AG04450 (cell line): ENCODE measurements at regions of chr10 and their contacts with region 1.

Region 1: DNA sequence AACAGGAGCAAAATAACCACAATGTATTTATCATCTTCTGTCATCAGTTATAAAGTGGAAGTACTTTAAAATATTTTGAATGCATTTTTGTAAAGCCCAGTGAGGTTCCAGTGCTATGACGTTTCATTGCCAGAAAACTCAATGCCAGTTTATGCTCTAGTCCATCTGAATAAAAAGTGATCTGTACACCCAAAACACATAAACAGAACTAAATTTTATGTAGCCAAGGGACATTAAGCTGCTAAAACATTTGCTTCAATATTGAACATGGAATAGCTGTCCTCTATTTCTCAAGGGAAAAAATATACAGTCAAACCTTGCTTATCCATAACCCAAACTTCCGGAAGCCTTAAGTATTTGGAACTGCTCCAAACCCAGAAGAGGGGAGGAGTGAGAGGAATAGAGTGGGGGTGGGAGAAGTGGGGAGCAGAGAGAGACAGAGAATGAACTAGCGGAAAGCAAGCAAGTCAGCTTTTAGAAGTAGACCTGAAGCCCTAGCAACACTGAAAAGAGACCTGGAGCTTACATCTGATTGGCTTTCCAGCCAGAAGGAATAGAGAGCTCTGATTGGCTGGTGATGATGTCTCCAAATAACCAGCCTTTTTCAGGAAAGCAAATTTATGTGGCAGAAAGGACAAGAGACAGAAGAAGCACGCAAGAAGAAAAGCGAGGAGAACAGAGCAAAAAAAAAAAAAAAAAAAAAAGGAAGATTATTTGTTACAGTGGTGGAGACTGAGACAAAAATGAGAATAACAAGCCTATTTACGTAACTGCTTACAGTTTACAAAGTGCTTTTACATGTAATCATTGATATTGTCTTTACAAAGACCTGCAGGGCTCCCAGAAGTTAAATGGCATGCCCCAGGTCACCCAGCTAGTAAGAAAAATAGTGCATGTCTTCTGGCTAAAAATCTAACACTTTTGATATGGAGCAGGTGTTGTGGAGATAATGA is 196.0 kb downstream of the RNLS start:
- DNase-seq: peak; percentile 44
- H3K4me3 ChIP-seq: no peak overlapping the region
- H3K27ac ChIP-seq: no peak overlapping the region
- H3K27me3 ChIP-seq: no peaks in the 10 kb centered on the region
- CTCF ChIP-seq: no peak

Region 2: GRCh38 chr10:87850742-87851205 is 536.3 kb before region 1 on chr10:
- CTCF ChIA-PET with region 1: interaction called, 20 read pairs
- POLR2A ChIA-PET with region 1: no interaction called
- DNase-seq: no peak
- H3K4me3 ChIP-seq: no peak overlapping the region
- H3K27ac ChIP-seq: no peak overlapping the region
- H3K27me3 ChIP-seq: no peaks in the 10 kb centered on the region
- CTCF ChIP-seq: peak; percentile 71

Region 3: GRCh38 chr10:87872828-87873227 is 514.3 kb before region 1 on chr10:
- CTCF ChIA-PET with region 1: interaction called, 10 read pairs
- POLR2A ChIA-PET with region 1: no interaction called
- DNase-seq: no peak
- H3K4me3 ChIP-seq: no peak overlapping the region
- H3K27ac ChIP-seq: no peak overlapping the region
- H3K27me3 ChIP-seq: no peaks in the 10 kb centered on the region
- CTCF ChIP-seq: no peak

Region 4: DNA sequence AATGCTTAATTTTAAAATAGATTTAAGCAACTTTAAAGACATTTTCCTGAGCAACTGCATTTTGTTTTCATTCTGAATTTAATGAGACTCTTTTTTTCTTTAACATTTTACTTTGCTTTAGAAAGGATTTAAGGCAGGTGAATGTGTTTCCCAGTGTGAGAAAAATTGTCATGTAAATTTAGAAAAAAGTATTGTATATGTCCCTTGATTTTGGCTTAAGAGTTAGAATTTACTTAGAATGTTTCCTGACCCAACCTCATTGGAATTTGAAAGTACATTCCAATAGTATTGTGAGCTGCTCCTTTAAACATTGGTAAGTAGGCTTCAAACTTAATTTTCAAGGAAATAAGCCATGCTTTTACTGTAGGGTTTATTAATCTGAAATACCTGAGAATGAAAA is 413.5 kb before region 1 on chr10:
- CTCF ChIA-PET with region 1: interaction called, 4 read pairs
- POLR2A ChIA-PET with region 1: interaction called, 14 read pairs
- DNase-seq: no peak
- H3K4me3 ChIP-seq: no peak overlapping the region
- H3K27ac ChIP-seq: no peak overlapping the region
- H3K27me3 ChIP-seq: no peaks in the 10 kb centered on the region
- CTCF ChIP-seq: no peak

Region 5: DNA sequence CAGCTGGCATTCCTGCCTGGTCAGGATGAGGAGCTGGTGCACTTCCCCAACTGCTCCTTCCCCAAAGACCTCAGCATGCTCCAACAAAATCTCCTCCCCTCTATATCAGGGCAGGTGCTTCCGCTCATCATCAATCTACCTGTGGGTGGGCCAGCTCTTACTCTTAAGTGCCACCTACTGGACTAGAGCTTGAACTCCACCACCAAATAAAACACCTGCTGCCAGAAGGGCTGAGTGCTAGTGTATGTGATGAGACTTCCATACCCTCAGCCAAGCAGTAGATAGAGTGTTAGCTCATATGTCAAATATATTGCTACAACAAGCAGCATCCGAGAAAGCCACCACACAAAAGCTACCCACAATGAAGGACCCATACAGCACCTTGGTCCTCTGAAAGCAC is 68.3 kb before region 1 on chr10:
- CTCF ChIA-PET with region 1: no interaction called
- POLR2A ChIA-PET with region 1: no interaction called
- DNase-seq: no peak
- H3K4me3 ChIP-seq: no peak overlapping the region
- H3K27ac ChIP-seq: no peak overlapping the region
- H3K27me3 ChIP-seq: no peaks in the 10 kb centered on the region
- CTCF ChIP-seq: no peak

Region 6: GRCh38 chr10:88366772-88367171 is 20.3 kb before region 1 on chr10:
- CTCF ChIA-PET with region 1: no interaction called
- POLR2A ChIA-PET with region 1: no interaction called
- DNase-seq: no peak
- H3K4me3 ChIP-seq: no peak overlapping the region
- H3K27ac ChIP-seq: no peak overlapping the region
- H3K27me3 ChIP-seq: no peaks in the 10 kb centered on the region
- CTCF ChIP-seq: no peak

Region 7: GRCh38 chr10:88553116-88553752 is 166.1 kb after region 1 on chr10:
- CTCF ChIA-PET with region 1: interaction called, 17 read pairs
- POLR2A ChIA-PET with region 1: no interaction called
- DNase-seq: peak; percentile 61
- H3K4me3 ChIP-seq: no peak overlapping the region
- H3K27ac ChIP-seq: no peak overlapping the region
- H3K27me3 ChIP-seq: no peaks in the 10 kb centered on the region
- CTCF ChIP-seq: peak; percentile 85